ENCODE measurements at regions of chr5 and their contacts with region 1.

Region 1: DNA sequence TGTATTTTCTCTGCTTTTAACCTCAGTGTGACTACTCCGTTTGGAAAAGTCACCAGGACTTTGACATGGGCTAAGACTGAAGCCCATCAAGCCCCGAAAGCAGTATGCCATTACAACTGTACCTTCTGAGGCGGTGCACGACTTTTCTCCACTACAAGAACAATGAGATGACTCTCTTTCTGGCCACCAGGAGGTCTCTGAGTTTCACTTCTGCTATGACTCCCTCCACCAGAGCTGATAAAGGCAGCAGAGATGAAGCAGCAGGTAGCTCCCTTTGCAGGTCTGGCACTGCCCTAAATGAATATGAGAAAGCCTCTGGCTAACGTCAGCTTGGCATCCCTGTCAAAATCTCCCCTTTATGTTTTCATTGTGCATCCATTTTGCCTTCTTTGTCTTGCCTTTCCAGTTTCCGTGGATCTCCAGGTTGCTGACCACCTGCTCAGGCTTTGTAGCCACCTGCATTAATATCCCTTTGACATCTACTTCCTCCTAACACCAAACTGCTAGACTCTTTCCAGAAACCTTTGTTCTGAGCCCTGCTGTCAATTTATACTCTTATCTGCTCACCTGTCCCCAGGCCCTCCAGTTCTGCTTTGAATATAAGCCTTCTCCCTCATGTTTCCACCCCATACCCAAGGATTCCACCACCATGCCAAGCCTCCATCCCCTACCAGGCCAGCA is 221.7 kb downstream of the ZNF608 start:
- DNase-seq: no peak
- ATAC-seq: peak; percentile 92
- H3K4me3 Mint-ChIP-seq: no peak overlapping the region
- H3K27ac Mint-ChIP-seq: peak overlapping the region; percentile 3
- H3K4me1 Mint-ChIP-seq: peaks cover 35% of the 10 kb centered on the region
- H3K27me3 Mint-ChIP-seq: peaks cover 9% of the 10 kb centered on the region
- CTCF ChIP-seq: no peak

Region 2: GRCh38 chr5:123671042-123671441 is 853.6 kb before region 1 on chr5:
- CTCF ChIA-PET with region 1: no interaction called
- POLR2A ChIA-PET with region 1: no interaction called
- intact Hi-C with region 1: loop called (anchors 5 kb)
- DNase-seq: no peak
- ATAC-seq: peak; percentile 37
- H3K4me3 Mint-ChIP-seq: no peak overlapping the region
- H3K27ac Mint-ChIP-seq: no peak overlapping the region
- H3K4me1 Mint-ChIP-seq: peaks cover 3% of the 10 kb centered on the region
- H3K27me3 Mint-ChIP-seq: no peaks in the 10 kb centered on the region
- CTCF ChIP-seq: peak; percentile 92

Region 3: DNA sequence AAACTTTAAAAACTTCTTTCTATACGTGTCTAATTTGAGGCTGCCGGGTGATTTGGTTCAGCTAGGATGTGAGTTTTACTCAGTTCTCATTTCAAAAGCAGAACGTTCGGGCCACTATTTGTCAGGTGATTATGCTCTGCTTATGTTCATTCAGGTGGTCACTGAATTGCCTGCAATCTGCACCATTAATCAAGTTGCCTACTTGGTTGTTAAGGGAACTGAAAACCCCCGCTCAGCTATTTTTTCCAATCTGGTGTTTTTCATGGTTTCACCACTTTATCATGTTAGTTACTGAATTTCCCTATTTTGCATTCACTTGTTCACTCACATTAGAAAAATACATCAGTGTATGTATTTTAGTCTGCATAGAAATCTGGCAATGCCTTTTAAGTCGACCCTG is 489.7 kb before region 1 on chr5:
- CTCF ChIA-PET with region 1: no interaction called
- POLR2A ChIA-PET with region 1: no interaction called
- intact Hi-C with region 1: loop called (anchors 5 kb)
- DNase-seq: no peak
- ATAC-seq: peak; percentile 94
- H3K4me3 Mint-ChIP-seq: peak overlapping the region; percentile 48
- H3K27ac Mint-ChIP-seq: peak overlapping the region; percentile 92
- H3K4me1 Mint-ChIP-seq: peaks cover 52% of the 10 kb centered on the region
- H3K27me3 Mint-ChIP-seq: no peaks in the 10 kb centered on the region
- CTCF ChIP-seq: no peak

Region 4: DNA sequence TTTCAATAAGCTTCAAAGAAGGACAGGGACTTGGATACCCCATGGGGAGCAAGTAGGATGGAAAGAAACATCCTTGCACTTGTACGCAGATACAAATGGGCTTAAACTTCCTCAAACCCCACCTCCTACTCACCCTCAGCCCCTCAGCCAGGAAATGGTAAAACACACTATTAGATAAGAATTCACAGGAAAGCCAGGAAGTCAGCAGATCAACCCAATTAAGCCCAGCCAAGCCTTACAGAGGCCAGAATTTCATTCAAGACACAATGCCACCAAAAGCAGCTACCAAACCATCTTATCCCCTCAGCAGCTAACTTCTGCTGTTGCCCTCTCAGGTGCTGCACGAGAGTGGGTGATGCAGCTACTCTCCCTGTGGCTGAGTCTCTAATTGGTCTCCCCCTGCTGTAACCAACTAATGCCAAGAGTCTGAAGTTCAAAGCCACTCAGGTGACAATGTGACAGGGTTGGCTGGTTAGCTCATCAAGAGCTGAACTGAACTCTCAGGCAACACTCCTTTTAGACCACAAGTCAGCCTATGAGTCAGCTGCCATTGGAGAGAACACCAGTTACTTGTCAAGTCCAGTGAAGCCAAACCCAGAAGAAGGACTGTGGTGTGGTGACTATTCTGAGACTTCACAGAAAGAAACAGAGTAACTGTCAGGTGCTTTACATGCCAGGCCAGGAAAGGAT is 19.8 kb after region 1 on chr5:
- CTCF ChIA-PET with region 1: no interaction called
- POLR2A ChIA-PET with region 1: no interaction called
- intact Hi-C with region 1: no loop called
- DNase-seq: no peak
- ATAC-seq: peak; percentile 90
- H3K4me3 Mint-ChIP-seq: no peak overlapping the region
- H3K27ac Mint-ChIP-seq: no peak overlapping the region
- H3K4me1 Mint-ChIP-seq: peaks cover 10% of the 10 kb centered on the region
- H3K27me3 Mint-ChIP-seq: no peaks in the 10 kb centered on the region
- CTCF ChIP-seq: no peak

Region 5: DNA sequence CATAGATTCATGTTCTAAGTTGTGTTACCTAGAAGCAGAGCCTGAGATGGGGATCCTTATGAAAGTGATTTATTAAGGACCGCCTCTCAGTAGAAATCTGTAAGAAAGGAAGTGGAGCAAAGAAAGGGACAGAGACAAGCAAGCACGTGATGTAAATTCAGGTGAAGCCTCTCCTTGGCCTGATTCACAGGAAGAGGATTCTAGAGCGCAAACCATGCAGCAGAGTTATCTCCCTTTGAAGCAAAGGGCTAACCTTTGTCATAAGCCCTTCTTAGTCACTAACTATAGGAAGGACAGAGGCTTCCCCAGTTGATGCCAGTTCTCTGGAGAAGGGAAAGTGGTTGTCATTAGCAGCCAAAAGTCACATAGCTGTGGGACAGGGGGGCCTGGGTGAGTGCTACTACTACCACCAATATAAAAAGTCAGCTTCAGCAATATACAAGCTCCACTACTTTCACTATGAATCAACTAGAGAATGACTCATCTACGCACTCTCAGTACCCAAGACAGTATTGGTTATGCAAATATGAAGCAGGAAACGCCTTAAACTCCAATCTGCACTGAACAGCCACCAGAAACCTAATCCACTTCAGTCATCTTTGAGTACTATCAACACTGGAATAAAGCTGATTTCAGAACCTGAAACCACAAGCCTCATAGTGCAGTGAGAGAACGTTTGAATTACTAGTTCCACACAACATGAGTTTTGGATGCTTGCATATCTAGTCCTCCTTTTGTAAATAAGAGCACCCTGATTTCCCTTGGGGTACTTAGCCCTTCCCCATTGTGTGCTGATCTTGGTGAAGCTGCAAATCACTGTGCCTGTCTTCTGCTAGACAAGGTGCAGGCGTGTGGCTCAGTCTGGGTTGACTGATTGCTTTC is 59.0 kb after region 1 on chr5:
- CTCF ChIA-PET with region 1: interaction called, 9 read pairs
- POLR2A ChIA-PET with region 1: no interaction called
- intact Hi-C with region 1: loop called (anchors 1 kb)
- DNase-seq: peak; percentile 23
- ATAC-seq: peak; percentile 89
- H3K4me3 Mint-ChIP-seq: peak overlapping the region; percentile 61
- H3K27ac Mint-ChIP-seq: peak overlapping the region; percentile 94
- H3K4me1 Mint-ChIP-seq: peaks cover 36% of the 10 kb centered on the region
- H3K27me3 Mint-ChIP-seq: no peaks in the 10 kb centered on the region
- CTCF ChIP-seq: no peak

Region 6: GRCh38 chr5:125412561-125413495 is 888.1 kb after region 1 on chr5:
- CTCF ChIA-PET with region 1: no interaction called
- POLR2A ChIA-PET with region 1: no interaction called
- intact Hi-C with region 1: loop called (anchors 10 kb)
- DNase-seq: peak; percentile 18
- ATAC-seq: peak; percentile 72
- H3K4me3 Mint-ChIP-seq: peak overlapping the region; percentile 29
- H3K27ac Mint-ChIP-seq: no peak overlapping the region
- H3K4me1 Mint-ChIP-seq: peaks cover 38% of the 10 kb centered on the region
- H3K27me3 Mint-ChIP-seq: no peaks in the 10 kb centered on the region
- CTCF ChIP-seq: no peak

Measured in activated B cell treated with CpG ODN at 0.5 μM for 24 hours (primary cell).